Activated CD8-positive, alpha-beta T cell treated with anti-CD3 and anti-CD28 coated beads, Interleukin-2, amount 10 ng/mL, durations not matched to agents 7 days and 5 days (primary cell): ENCODE measurements at regions of chr18 and their contacts with region 1.

Region 1: DNA sequence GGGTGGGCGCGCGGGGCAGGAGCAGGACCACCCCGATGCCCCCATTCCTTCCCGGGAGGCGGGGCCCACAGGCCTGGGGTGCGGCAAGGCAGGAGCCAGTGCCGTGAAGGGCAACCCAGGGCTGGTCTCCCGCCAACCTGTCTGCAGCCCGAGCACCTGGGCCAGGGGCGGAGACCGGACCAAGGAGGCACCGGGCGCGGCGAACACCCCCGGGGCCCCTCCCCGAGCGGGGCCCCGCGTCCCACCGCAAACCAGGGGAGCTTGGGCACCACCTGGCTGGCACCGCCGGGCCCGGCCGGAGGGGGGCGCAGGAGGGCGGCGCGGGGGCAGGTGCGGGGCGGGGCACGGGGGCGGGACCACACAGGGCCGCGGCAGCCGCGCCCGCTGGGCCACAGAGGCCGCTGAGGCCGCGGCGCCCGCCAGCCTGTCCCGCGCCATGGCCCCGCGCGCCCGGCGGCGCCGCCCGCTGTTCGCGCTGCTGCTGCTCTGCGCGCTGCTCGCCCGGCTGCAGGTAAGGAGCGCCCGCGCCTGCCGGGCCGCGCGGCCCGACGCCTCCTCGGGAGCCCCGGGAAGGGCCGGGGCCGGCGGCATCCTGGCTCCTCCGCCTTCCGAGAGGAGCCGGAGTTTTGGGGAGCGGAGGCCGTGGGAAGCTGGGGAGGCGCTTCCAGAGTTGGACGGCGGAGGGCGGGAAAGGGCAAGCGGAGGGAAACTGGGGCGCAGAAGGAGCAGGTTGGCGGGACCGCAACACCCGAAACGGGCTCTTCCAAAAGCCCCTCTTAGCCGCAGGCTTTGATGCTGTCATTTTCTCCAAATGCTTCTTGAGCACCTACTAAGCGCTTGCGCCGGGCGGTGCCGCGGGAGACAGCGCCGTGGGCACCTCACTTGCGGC is at the start of gene TNFRSF11A:
- DNase-seq: peak; percentile 68
- ATAC-seq: peak; percentile 83
- H3K4me3 Mint-ChIP-seq: peak within 1 kb of the TSS; percentile 75
- H3K27ac Mint-ChIP-seq: no peak within 1 kb of the TSS
- H3K4me1 Mint-ChIP-seq: peaks cover 45% of the 10 kb centered on the region
- H3K27me3 Mint-ChIP-seq: peaks cover 52% of the 10 kb centered on the region
- total RNA-seq, gene TNFRSF11A: 4.0 to 4.3 TPM

Region 2: DNA sequence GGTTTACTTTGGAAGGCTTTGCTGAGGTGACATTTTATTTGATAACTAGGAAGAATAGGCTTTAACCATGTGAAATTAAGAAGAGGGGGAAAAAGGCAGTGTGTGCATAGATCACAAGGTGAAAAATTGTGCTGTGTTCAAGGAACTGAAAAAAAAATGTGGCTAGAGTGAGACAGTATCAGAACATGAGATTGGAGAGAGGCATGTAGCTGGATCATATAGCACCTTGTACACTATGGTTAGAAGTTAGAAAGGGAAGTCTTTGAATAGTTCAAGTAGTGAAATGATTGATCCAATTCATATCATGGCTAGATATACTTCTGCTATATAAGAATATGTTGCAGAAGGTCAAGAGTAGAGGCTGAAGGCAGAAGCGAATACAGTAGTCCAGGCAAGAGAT is 12.3 kb before region 1 on chr18:
- CTCF ChIA-PET with region 1: interaction called, 14 read pairs
- POLR2A ChIA-PET with region 1: no interaction called
- DNase-seq: no peak
- ATAC-seq: no peak
- H3K4me3 Mint-ChIP-seq: no peak overlapping the region
- H3K27ac Mint-ChIP-seq: no peak overlapping the region
- H3K4me1 Mint-ChIP-seq: no peaks in the 10 kb centered on the region
- H3K27me3 Mint-ChIP-seq: peaks cover 10% of the 10 kb centered on the region